GM13977 (cell line): ENCODE measurements at regions of chr15 and their contacts with region 1.

Region 1: GRCh38 chr15:65318870-65319356 is 14.4 kb downstream of the RNU5B-1 start:
- DNase-seq: peak; percentile 87
- CTCF ChIP-seq: peak; percentile 87

Region 2: DNA sequence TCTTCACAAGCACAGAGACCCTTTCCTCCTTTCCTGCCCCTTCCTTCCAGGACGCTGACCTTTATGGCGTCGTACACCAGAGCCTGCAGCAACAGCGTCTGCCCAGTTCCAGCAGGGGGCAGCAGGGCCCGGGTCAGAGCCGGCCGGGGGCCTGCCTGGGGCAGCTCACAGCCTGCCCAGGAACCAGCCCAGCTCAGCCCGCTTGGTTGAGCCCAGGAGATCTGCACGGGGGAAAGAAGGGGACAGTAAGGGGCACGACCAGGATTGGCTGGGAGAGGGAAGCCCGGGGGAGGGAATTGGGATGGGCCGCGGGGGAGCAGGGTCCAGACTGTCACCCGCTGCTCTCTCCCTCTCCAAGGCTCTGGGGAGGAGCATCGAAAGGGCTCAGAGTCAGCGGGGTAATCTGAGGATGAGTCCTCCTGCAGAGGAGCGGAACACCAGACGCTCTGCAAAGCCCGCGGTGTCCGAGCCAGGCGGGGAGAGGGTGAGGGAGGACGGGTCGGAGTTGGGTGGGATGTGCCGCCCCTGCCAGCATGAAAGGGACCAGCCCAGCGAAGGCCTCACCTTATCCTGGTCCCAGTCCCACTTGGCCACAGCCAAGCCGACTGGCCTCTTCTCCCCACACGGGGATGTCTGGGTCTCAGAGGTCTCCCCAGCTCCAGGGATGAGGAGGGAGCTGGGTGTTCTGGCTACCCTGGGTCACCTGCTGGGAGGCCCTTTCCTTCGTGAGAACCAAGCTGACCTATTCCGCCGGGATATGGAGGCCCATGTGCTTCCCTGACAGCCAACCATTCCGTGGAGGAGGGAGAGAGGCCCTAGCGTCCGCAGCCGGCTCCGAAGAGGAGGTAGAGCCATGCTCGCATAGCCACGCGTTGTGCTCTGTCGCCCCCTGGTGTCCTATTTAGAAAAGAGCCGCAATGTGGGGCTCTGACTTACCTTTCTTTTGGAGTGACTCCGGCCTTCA is 66.3 kb after region 1 on chr15:
- in situ Hi-C with region 1: loop called (anchors 5 kb)
- DNase-seq: peak; percentile 95
- CTCF ChIP-seq: peak; percentile 95

Region 3: DNA sequence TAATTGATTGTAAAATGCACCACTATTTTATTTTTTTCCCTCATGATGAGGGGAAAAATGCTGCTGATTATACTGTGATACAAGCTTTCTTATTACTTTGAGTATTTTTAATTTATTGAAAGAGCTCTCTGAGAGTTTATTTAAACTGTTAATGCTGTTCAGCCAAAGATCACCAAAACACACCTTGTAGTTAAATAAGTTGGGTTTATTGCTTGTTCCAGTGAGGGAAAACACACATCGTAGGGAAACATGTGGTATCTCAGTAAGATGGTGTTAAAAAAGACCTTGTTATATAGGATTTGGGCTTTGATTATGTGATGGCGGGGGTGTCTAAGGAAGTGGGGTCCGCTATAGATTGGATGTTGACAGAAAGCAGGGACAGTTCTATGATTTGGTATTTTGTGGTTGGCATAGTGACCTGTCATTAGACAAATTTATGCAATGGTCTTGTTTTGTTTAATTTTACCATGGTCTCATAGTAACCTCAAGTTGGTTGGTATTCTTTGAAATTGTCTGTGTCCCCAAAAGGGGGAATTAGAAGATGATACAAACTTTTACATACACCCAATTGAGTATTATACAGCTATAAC is 222.4 kb after region 1 on chr15:
- in situ Hi-C with region 1: no loop called
- DNase-seq: no peak
- CTCF ChIP-seq: no peak